Dorsolateral prefrontal cortex (tissue), 120 donors: ENCODE measurements at regions of chr1 and their contacts with region 1.

Region 1: GRCh38 chr1:152052606-152053005 is 15.8 kb upstream of the S100A11 start:
- DNase-seq: peak; percentile 65 to 89 (median 83)
- H3K4me3 ChIP-seq: no peak overlapping the region
- H3K27ac ChIP-seq: no peak overlapping the region
- H3K27me3 ChIP-seq: peaks cover 0 to 34% (median 0%) of the 10 kb centered on the region in 45 donors
- CTCF ChIP-seq: peak; percentile 83 to 97 (median 92)

Region 2: DNA sequence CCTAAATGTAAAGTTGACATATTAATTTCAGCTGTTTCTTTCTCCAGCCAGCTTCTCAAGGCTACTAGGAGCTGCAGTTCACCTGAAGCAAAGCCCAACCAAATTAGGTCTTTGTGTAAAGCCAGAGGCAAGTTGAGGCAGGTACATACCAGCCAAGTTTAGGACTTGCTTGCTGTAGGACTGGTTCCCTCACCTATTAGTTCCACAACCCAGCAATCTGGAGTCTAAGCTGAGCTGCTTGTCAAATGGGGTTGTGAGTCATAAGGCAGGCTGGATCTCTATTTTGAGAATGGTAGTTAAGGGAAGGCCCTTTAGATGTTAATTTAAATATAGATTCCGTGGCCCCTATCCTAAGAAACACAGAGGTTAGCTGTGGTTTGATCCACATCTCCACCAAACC is 314.8 kb after region 1 on chr1:
- intact Hi-C with region 1: no loop called
- DNase-seq: no peak
- H3K4me3 ChIP-seq: no peak overlapping the region
- H3K27ac ChIP-seq: no peak overlapping the region
- H3K27me3 ChIP-seq: peaks cover 0 to 5% (median 0%) of the 10 kb centered on the region in 45 donors
- CTCF ChIP-seq: no peak

Region 3: GRCh38 chr1:152459596-152460528 is 407.3 kb after region 1 on chr1:
- intact Hi-C with region 1: loop called (anchors 5 kb)
- DNase-seq: peak in 8 of 10 donors; percentile 10 to 70 (median 62)
- H3K4me3 ChIP-seq: peak overlapping the region in 36 of 59 donors; percentile 3 to 56 (median 30)
- H3K27ac ChIP-seq: peak overlapping the region in 13 of 59 donors; percentile 2 to 71 (median 31)
- H3K27me3 ChIP-seq: peaks cover 0 to 3% (median 0%) of the 10 kb centered on the region in 45 donors
- CTCF ChIP-seq: peak; percentile 41 to 89 (median 76)